PC-9 (cell line): ENCODE measurements at regions of chr7 and their contacts with region 1.

Region 1: DNA sequence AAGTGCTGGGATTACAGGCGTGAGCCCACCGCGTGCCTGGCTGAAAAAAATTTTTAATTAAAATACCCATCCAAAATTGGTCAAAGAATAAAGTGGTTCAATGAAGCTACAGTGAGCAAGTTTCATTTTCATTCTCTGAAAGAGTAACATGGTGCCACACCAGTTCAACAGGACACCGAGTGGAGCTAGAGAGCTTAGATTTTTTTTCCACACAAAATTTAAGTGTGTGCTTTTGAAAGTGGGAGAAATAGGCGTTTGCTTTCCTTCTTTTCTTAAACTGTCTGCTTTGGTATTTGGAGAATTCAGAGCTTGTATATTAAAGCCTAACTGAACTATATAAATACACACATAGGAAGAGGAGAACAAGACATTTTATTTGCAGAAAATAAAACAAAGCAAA is 43.4 kb downstream of the BPGM start:
- DNase-seq: no peak
- H3K4me3 ChIP-seq: no peak overlapping the region
- H3K27ac ChIP-seq: no peak overlapping the region
- H3K4me1 ChIP-seq: no peaks in the 10 kb centered on the region
- H3K27me3 ChIP-seq: no peaks in the 10 kb centered on the region
- CTCF ChIP-seq: peak; percentile 59

Region 2: DNA sequence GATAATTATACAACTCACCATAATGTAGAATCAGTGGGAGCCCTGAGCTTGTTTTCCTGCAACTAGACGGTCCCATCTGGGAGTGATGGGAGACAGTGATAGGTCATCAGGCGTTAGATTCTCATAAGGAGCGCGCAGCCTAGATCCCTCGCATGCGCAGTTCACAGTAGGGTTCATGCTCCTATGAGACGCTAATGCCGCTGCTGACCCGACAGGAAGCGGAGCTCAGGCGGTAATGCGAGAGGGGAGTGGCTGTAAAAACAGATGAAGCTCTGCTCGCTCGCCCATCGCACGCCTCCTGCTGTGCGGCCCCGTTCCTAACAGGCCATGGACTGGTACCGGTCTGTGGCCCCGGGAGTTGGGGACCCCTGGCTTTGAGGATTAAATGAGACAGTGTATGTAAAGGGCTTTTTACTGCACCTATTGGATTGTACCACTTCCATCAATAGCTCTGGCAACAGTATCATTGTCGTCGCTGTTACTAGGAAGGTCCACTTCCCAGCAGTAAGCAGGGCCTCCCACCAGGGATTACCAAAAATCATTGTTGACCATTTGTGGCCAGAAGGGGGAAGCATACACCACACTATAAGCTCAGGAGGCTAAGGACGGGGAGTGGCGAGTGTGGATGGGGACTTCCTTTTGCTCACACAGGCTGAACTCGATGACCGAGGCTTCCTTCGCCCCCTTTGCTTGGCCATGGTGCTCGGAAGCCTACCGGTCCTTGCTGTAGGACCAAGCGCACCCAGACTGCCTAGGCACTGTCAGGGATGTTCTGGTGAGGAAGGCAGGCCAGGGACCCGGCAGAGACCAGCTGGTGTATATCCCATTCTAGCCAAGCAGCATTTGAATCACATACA is 257.5 kb before region 1 on chr7:
- CTCF ChIA-PET with region 1: interaction called, 4 read pairs
- POLR2A ChIA-PET with region 1: no interaction called
- intact Hi-C with region 1: loop called (anchors 5 kb)
- DNase-seq: peak; percentile 88 to 91
- H3K4me3 ChIP-seq: peak overlapping the region; percentile 51
- H3K27ac ChIP-seq: peak overlapping the region; percentile 80
- H3K4me1 ChIP-seq: peaks cover 48% of the 10 kb centered on the region
- H3K27me3 ChIP-seq: no peaks in the 10 kb centered on the region
- CTCF ChIP-seq: peak; percentile 96

Region 3: GRCh38 chr7:134710859-134711624 is 21.0 kb after region 1 on chr7:
- CTCF ChIA-PET with region 1: no interaction called
- POLR2A ChIA-PET with region 1: interaction called, 13 read pairs
- intact Hi-C with region 1: no loop called
- DNase-seq: no peak
- H3K4me3 ChIP-seq: no peak overlapping the region
- H3K27ac ChIP-seq: no peak overlapping the region
- H3K4me1 ChIP-seq: no peaks in the 10 kb centered on the region; the same call in 1 of the 2 replicates
- H3K27me3 ChIP-seq: no peaks in the 10 kb centered on the region
- CTCF ChIP-seq: no peak

Region 4: GRCh38 chr7:134943764-134944400 is 253.9 kb after region 1 on chr7:
- CTCF ChIA-PET with region 1: interaction called, 4 read pairs
- POLR2A ChIA-PET with region 1: no interaction called
- intact Hi-C with region 1: loop called (anchors 1 kb)
- DNase-seq: no peak
- H3K4me3 ChIP-seq: no peak overlapping the region
- H3K27ac ChIP-seq: no peak overlapping the region
- H3K4me1 ChIP-seq: peaks cover 23% of the 10 kb centered on the region
- H3K27me3 ChIP-seq: no peaks in the 10 kb centered on the region
- CTCF ChIP-seq: peak; percentile 72

Region 5: GRCh38 chr7:135164357-135165061 is 474.5 kb after region 1 on chr7:
- CTCF ChIA-PET with region 1: interaction called, 10 read pairs
- POLR2A ChIA-PET with region 1: interaction called, 3 read pairs
- intact Hi-C with region 1: no loop called
- DNase-seq: no peak
- H3K4me3 ChIP-seq: no peak overlapping the region
- H3K27ac ChIP-seq: no peak overlapping the region
- H3K4me1 ChIP-seq: peaks cover 26% of the 10 kb centered on the region
- H3K27me3 ChIP-seq: no peaks in the 10 kb centered on the region
- CTCF ChIP-seq: no peak

Region 6: GRCh38 chr7:135274495-135275268 is 584.7 kb after region 1 on chr7:
- CTCF ChIA-PET with region 1: interaction called, 4 read pairs
- POLR2A ChIA-PET with region 1: no interaction called
- intact Hi-C with region 1: loop called (anchors 10 kb)
- DNase-seq: peak; percentile 58 to 70
- H3K4me3 ChIP-seq: no peak overlapping the region
- H3K27ac ChIP-seq: no peak overlapping the region
- H3K4me1 ChIP-seq: no peaks in the 10 kb centered on the region
- H3K27me3 ChIP-seq: peaks cover 4% of the 10 kb centered on the region; the same call in 1 of the 2 replicates
- CTCF ChIP-seq: peak; percentile 96